ENCODE measurements at regions of chr3 and their contacts with region 1.

Region 1: DNA sequence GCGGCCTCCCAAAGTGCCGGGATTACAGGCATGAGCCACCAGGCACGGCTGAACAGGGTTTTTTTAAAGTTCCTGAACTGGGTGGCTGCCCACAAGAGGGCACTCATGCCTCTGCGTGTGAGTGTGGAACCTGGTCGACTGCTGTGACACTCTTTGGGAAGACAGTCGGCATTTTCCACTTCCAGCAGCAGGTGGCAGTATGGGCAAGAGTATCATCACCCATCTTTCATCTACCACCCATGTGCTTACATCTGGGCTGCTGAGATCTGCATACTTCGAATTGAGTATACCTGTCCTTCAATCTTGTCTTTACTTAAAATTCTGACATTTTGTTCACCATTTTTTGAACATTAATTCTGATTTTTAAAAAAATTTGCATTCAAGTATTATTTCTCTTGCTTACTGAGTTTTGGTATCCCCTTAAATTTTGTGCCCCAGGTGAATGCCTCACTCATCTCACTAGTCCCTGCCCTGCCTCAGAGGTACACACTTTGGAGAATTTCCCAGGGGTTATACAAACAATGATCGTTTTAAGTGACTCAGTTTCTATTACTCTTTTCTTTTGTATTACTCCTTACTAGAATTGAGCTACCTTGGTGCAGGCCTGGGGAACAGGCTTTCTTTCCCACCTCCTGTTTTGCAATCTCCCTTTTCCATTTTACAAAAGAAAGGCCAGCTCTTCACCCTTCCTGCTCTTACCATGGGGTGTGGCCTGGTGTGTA is 11.8 kb downstream of the CLEC3B start:
- DNase-seq: peak; percentile 95
- ATAC-seq: peak; percentile 84
- H3K4me3 Mint-ChIP-seq: no peak overlapping the region
- H3K27ac Mint-ChIP-seq: no peak overlapping the region
- H3K4me1 Mint-ChIP-seq: peaks cover 48% of the 10 kb centered on the region
- H3K27me3 Mint-ChIP-seq: peaks cover 28% of the 10 kb centered on the region

Region 2: DNA sequence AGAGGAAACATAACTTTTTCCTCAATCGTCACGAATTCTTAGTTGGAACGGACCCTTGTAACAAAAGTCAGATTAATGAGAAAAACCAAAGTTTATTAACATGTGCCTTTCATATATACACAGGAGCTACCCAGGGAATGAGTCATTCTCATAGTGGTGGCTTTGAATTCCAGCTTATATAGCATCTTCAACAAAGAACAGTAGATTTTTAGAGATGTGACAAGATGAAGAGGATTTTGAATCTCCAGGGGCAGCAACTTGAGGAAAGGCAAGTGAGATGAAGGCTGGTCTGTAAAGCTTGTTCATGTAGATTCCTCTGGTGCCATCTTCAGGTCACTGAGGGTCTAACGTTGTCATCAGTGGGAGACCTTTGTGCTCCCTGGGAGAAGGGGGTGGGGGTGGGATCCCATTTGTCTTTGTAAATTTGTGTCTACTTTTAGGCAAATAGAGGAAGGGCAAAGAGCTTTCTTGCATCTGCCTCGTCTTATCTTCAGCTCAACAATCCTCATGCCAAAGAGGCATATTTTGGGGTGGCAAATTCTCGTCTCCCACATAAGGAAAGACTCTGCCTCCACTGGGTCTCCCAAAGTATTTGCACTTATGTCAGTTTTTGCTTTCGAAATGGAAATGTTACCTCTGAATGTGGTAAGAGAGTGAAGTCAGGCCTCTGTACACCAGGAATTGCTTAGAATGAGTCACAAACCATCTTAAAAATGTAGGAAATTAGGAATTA is 17.7 kb after region 1 on chr3:
- CTCF ChIA-PET with region 1: interaction called, 71 read pairs
- DNase-seq: no peak
- ATAC-seq: no peak
- H3K4me3 Mint-ChIP-seq: no peak overlapping the region
- H3K27ac Mint-ChIP-seq: no peak overlapping the region
- H3K4me1 Mint-ChIP-seq: peaks cover 22% of the 10 kb centered on the region
- H3K27me3 Mint-ChIP-seq: peaks cover 2% of the 10 kb centered on the region

Region 3: GRCh38 chr3:45224824-45225464 is 187.0 kb after region 1 on chr3:
- CTCF ChIA-PET with region 1: interaction called, 15 read pairs
- DNase-seq: peak; percentile 47
- ATAC-seq: peak; percentile 41
- H3K4me3 Mint-ChIP-seq: peak overlapping the region; percentile 65
- H3K27ac Mint-ChIP-seq: peak overlapping the region; percentile 63
- H3K4me1 Mint-ChIP-seq: peaks cover 10% of the 10 kb centered on the region
- H3K27me3 Mint-ChIP-seq: peaks cover 81% of the 10 kb centered on the region

Region 4: DNA sequence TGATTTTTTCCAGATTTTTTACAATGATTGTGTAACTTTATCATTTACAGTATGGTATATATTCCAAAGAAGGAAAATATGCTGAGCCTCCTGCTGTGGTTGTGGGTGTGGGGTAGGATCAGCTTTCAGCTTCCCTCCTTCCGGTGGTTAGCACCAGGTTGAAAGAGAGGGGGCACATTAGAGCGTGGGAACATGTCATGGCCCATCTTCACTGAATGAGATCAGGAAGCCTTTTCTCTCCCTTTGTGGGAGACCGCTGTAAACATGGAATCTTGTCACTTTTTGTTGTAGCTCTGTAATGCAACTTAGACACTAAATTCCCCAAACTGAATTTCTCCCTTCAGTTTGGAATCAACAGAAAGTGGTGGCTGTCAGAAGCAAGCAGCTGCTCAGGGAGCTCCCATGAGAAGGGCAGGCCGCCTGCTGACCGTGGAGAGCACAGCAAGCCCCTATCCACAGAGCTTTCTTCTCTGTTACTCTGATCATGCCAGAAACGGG is 470.0 kb after region 1 on chr3:
- CTCF ChIA-PET with region 1: interaction called, 14 read pairs
- DNase-seq: no peak
- ATAC-seq: no peak
- H3K4me3 Mint-ChIP-seq: no peak overlapping the region
- H3K27ac Mint-ChIP-seq: no peak overlapping the region
- H3K4me1 Mint-ChIP-seq: no peaks in the 10 kb centered on the region
- H3K27me3 Mint-ChIP-seq: no peaks in the 10 kb centered on the region

Measured in activated CD8-positive, alpha-beta memory T cell treated with anti-CD3 and anti-CD28 coated beads, Interleukin-2, amount 10 ng/mL, durations not matched to agents 7 days and 5 days (primary cell).